Right cardiac atrium (tissue), 5 donors: ENCODE measurements at regions of chr11 and their contacts with region 1.

Region 1: DNA sequence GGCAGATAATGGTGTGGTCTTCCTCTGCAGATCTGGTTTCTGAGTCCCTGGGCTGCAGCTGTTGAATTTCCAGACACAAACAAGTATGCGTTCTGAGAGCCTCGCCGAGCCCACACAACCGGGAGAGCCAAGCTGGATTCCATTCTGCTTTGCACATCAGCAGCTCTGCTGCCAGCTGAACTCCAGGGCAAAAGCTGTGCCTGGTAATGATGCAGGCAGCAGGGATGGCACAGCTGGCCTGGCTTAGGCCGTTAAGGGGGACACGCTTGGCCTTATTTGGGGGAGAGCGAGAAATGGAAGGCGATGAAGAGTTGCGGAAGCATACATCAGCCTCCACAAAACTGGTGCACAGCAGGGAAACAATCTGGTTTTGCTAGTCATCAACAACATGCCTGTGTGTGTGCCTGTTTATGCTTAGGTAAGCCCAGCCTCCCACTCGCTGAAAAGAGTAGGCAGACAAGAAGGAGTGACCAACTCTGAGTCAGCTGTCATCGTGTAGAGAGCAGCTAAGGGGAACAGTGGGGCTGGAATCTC is 25.1 kb downstream of the ADAMTS8 start:
- DNase-seq: peak; percentile 68 to 78 (median 75)
- ATAC-seq: peak; percentile 68 to 75
- H3K4me3 ChIP-seq: no peak overlapping the region
- H3K27ac ChIP-seq: peak overlapping the region; percentile 70
- H3K4me1 ChIP-seq: peaks cover under 1% of the 10 kb centered on the region
- H3K27me3 ChIP-seq: no peaks in the 10 kb centered on the region

Region 2: DNA sequence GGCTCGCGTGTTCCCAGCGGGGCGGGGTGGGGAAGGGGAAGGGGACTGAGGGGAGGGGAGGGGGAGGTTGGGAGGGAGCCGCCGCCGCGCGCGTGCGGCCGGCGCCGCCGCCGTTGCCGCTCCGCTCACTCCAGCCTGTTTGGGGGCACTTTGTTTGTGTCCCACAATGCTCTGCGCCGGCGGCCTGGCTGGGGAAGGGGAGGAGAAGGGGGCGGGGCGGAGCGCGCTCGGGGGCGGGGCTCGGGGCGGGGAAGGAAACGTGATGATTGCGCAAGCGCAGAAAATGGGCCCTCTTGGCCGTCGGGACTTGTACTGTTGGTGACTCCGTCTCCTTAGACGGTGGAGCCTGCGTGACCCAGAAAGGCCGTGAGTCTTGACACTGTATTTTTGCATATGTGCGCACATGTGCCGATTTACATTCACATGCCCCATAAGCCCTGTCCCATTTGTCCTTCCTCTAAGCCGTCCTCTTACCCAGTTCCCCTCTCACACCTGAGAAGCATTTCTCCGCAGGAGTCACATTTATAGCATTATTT is 88.5 kb before region 1 on chr11 and contains the start of gene ZBTB44:
- intact Hi-C with region 1: loop called in 1 of 4 experiments (anchors 10 kb)
- DNase-seq: peak; percentile 94 to 96 (median 96)
- ATAC-seq: peak; percentile 98 to 99
- H3K4me3 ChIP-seq: peak within 1 kb of the TSS; percentile 82
- H3K27ac ChIP-seq: peak within 1 kb of the TSS; percentile 99
- H3K4me1 ChIP-seq: peaks cover 2% of the 10 kb centered on the region
- H3K27me3 ChIP-seq: no peaks in the 10 kb centered on the region
- total RNA-seq, gene ZBTB44: 42.9 to 47.0 (median 46.2) TPM